Right ventricle myocardium inferior (tissue), 1 donor: ENCODE measurements at regions of chr1 and their contacts with region 1.

Region 1: DNA sequence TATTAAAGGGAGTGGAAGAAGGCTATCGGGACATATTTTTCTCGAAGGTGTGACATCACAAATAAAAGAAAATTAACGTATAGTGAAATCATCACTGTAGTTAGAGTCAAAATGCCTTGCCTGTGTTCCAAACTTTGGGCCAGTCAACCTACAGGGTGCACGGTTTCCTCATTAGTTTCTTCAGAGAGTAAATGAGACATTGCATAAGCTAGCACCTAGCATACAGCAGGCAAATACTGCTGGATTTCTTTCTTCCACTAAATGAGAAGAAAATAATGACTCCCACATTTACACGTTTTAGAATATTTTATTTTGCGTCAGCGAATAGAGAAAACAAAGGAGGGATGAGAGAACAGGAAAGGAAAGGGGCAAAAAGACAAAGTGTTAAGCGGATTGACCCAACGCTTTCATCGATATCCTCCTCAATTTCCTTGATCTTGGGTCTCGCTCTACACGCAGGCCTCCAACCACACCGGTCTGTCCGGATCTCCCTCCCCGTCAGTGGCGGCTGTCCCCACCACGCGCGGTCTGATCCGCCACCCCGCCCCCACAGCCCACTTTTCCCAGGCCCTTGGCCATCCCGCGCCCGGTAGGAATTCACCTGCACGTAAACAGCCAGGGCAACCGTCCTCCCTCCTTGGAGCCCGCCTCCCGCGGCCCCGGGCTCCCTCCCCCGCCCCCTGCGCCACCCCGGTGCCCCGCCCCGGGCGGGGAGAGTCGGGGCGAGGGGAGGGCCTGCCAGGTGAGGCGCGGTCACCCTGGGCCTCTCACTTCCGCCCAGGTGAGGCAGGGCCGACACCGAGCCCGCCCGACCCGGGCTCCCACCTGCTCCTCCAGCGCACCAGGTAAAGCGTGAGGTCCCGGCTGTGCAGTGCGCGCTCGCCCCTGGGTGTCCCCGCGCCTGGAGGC is at the start of gene PATJ:
- DNase-seq: peak; percentile 68
- ATAC-seq: peak; percentile 76
- total RNA-seq, gene PATJ: 121 TPM

Region 2: DNA sequence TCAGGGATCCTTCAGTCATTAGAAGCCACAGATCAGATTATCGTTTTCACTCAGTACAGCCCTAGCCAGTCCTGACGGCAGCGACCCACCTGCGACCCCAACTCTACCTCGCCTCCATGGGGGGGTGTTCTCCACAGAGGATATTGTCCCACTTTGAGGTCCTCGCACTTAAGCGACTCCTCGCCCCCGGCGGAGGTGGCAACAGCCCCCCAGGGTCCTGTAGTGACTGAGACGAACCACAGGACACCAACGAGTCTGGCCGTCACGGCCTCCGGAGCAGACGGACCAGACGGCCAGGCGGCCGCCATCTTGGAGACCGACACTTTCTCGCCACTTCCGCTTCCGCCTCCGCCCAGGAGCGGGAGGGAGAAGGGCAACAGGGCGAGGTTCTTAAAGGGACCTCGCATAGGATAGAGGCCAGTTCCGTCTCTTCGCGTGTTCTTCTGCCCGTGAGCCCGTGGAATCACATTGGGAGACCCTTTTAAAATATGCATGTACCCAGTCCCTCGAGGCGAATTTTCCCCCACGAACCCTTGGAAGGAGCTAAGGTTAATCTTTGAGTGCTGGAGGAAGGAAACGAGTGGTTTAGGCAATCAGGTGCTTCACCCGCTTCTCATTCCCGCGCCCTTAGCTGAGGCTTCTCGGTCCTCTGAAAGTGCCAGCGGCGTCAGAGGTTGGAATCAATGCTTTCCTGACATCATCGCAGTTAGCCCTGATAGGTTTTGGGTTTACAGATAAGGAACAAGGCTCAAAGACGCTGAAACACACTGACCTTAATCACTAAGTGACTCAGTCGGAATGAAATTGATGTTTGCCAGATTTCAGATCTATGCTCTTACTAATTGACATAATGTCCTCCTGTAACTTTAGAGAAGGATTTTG is 16.9 kb before region 1 on chr1 and contains the start of gene TM2D1:
- intact Hi-C with region 1: loop called (anchors 2 kb)
- DNase-seq: peak; percentile 96
- ATAC-seq: peak; percentile 99
- total RNA-seq, gene TM2D1: 32.3 TPM

Region 3: DNA sequence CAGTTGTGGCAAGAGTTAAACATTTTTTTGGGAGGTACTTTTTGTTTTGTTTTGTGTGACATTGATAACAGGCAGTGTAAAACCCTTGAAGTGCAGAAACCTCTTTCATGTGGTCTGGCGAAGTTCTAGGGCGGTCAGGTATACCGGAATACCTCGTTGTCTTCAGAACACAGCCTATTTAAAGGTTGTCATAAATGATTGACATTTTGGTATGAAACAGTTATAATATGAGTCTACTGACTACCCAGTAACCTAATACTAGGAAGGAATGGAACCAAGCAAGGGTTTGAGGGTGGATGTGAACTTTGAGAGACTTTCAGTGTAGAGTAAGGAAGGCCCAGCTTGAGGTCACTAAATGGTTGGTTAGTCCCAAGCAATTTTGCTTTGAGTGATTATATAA is 40.8 kb after region 1 on chr1:
- intact Hi-C with region 1: no loop called
- DNase-seq: no peak
- ATAC-seq: no peak

Region 4: GRCh38 chr1:61825393-61825792 is 83.4 kb after region 1 on chr1:
- intact Hi-C with region 1: no loop called
- DNase-seq: no peak
- ATAC-seq: no peak

Region 5: GRCh38 chr1:61836649-61837048 is 94.7 kb after region 1 on chr1:
- intact Hi-C with region 1: loop called (anchors 2 kb)
- DNase-seq: no peak
- ATAC-seq: no peak